AG04450 (cell line): ENCODE measurements at regions of chr5 and their contacts with region 1.

Region 1: DNA sequence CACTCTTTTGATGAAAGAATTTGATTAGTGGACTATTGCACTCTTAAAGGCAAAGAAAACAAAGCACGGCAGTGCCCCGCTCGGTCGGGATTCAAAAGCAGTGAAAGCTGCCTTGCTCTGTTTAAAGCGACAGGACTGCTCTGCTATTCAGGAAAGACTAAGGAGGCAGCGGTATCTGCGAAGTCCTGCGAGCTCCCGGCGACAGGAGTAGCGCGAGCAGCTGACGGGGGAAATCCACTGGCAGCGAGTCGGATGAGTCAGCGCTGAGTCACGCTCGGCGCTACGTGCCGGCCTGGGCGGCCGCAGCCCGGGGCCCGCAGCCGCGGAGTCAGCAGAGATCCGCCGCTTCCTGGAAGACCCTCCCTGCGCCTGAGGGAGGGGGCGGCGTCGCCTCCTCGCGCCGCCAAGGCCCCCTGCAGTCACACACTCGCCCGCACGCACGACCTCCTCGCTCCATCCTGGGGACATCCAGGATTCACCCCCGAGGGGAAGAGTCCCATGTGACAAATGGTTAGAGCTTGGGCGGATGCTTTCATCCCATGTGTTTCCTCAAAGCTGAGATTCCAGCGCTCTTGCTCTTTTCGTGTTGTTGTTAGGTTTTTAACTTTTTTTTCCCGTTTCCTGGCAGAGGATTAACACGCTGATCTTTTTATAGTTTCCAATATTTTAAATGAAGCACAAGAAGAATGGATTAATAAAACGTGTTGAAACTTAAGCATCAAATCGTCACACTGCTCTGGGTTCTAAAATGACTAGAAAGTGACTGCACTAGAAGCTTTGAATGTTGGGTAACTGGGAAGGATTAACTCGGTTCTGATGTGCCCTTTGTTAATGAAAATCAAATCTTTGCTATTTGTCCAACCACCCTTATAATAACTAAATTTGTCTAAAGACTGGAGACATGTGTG is 102.5 kb downstream of the ARRDC3 start:
- DNase-seq: peak; percentile 91
- H3K4me3 ChIP-seq: peak overlapping the region; percentile 62
- H3K27ac ChIP-seq: peak overlapping the region; percentile 94
- H3K27me3 ChIP-seq: no peaks in the 10 kb centered on the region
- CTCF ChIP-seq: no peak

Region 2: DNA sequence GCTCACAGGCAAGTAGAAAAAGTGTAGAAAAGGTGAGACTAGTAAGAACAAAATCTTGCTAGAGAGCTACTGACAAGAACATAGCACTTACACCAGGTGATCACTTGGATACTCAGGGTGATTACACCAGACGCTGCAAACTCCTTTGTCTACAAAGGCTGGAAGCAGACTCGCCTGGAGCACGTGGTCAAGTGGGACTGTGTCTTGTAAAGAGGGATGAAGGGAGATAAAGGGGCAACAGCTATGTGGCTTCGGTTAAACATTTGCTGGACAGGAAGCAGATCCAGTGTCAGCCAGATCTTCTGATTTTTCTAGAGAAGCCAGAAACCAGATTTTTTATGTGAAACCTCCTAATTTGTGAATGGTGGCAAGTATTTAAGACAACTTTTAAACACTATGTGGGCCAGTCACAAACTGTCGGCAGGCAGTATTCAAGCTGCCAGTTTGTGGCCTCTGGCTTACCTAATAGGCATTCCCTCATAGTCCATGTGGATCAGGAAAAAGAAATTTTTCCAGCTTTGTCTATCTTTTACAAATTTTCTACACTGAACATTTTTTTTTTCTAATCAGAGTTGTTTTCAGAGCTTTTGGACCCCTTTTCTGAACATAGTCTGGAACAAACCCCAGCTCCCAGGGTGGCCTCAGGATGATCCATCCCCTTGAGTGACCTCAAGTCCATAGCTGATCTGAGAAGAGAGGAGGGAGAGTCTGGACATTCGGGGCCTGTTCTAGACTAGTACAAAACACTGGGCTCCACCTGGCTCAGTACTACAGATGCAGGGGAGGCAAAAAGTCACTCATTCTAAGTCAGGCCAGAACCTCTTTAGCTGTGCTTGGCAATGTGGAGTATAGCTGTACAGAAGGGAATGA is 160.4 kb before region 1 on chr5:
- CTCF ChIA-PET with region 1: no interaction called
- POLR2A ChIA-PET with region 1: interaction called, 11 read pairs
- DNase-seq: no peak
- H3K4me3 ChIP-seq: no peak overlapping the region
- H3K27ac ChIP-seq: no peak overlapping the region
- H3K27me3 ChIP-seq: no peaks in the 10 kb centered on the region
- CTCF ChIP-seq: no peak

Region 3: DNA sequence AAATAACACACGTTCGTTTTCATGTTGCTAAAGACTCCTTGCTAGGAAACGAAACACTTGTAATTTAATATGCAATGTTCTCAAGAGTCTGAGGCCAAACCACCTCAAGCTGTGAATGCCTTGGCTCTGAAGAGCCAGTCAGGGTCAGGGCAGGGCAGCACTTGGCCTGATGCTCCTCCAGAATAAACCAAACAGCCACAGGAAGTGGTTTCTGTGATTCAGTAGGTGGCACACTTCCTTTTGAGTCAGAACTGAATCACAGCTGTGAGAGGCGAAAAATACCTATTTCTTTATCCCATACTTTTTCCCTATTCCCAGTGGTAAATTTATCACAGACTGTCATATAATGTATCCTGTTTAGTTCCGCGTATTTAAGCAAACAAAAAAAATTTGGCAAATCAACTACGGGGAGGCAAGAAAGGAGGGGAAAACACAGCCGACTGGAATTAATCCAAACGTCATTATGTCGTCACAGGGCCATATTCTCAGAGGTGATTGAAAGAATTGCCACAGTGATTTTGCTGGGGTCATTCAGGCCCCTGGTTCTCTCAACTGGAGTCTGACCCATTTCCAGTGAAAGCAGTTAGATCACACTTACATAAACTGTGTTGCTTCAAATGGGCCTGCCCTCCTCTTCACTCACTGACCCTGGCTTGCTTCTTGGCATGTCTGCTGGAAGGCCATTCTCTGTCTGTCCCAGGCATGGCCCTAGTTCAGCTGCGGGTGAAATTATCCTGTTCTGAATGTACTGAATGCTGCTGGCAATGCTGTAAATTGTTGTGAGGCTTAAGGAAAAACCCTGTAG is 31.3 kb after region 1 on chr5:
- CTCF ChIA-PET with region 1: interaction called, 3 read pairs
- POLR2A ChIA-PET with region 1: interaction called, 15 read pairs
- DNase-seq: peak; percentile 96
- H3K4me3 ChIP-seq: no peak overlapping the region
- H3K27ac ChIP-seq: peak overlapping the region; percentile 90
- H3K27me3 ChIP-seq: no peaks in the 10 kb centered on the region
- CTCF ChIP-seq: no peak